ENCODE measurements at regions of chr5 and their contacts with region 1.

Region 1: GRCh38 chr5:96687812-96688453 is 25.8 kb downstream of the CAST start:
- DNase-seq: no peak
- ATAC-seq: peak; percentile 73
- H3K4me3 ChIP-seq: no peak overlapping the region
- H3K27ac ChIP-seq: no peak overlapping the region
- H3K4me1 ChIP-seq: peaks cover 11% of the 10 kb centered on the region
- H3K27me3 ChIP-seq: no peaks in the 10 kb centered on the region
- CTCF ChIP-seq: peak; percentile 56

Region 2: DNA sequence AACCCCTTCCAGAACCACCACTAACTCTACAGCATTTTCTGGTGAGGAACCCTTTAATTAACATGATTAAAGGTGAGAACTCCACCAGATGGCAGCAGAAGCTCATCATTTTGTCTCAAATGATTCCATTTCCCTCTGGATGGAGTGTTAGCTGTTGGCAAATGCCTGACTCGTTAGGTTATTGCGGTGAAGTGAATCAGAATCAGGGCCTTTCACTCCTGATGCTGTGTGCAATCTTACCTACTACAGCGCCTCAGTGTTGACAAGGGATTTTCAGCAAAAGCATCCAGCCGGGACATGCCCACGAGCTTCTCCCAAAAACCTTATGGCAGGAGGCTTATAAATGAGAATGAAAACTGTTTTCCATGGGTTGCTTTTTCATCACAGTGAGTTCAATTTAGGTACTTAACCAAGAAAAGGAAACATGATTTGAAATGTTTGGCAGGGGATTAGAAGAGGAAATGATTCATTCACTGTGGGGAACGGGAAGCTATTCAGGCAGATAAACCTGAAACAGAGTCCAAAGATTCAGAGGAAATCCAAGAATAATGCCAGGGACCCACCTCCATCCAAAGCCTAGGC is 73.7 kb before region 1 on chr5:
- intact Hi-C with region 1: loop called (anchors 10 kb)
- DNase-seq: no peak
- ATAC-seq: peak; percentile 96
- H3K4me3 ChIP-seq: no peak overlapping the region
- H3K27ac ChIP-seq: peak overlapping the region; percentile 24
- H3K4me1 ChIP-seq: peaks cover 12% of the 10 kb centered on the region
- H3K27me3 ChIP-seq: no peaks in the 10 kb centered on the region
- CTCF ChIP-seq: peak; percentile 63

Measured in upper lobe of right lung (tissue), 1 donor.